IMR-90 (cell line): ENCODE measurements at regions of chr1 and their contacts with region 1.

Region 1: DNA sequence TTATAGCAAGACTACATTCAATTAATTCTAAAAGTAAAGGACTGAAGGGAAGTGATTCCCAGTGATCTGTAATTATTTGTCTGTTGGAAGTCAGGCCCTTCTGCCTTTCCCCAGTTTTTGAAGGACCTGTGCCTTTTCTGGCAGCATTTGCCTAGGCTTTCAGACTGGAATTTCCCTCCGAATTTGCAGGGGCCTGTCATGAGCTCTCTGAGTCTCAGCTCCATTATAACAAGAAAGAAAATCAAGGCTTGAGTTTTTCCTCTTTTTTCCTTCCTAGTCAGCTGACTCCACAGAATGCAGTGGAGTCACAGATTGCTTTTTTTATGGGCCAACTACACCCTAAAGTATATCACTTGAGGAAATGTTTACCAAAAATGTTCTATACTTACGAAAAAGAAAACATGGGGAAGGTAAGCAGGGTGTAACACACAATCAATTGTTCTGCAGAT is 1.1 kb downstream of the NR5A2 start:
- DNase-seq: no peak
- ATAC-seq: peak; percentile 32
- H3K4me3 ChIP-seq: peak overlapping the region; percentile 63
- H3K27ac ChIP-seq: no peak overlapping the region
- H3K4me1 ChIP-seq: 0 out of 2 replicates have a peak, but pooled peaks cover 2% of the 10 kb centered on the region
- H3K27me3 ChIP-seq: peaks cover 51% of the 10 kb centered on the region
- CTCF ChIP-seq: no peak
- POLR2A ChIP-seq: no peak
- RAD21 ChIP-seq: no peak

Region 2: DNA sequence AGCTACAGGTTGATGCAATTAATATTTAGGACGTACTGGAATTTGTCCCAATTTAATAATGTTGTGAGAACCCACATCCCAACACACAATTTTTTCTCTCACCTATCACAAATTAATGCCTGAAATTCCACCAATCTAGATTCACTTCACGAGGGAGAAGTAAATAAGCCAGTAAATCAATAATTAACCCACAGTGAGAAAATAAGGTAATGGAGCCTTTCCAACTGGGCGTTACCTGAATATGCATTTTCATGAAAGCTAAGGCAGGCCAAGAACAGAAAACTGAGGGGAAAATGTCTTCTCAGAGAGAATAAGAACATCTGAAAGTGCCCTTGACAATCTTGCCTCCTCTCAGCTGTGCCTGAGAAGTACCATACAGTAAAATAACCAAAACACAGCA is 241.9 kb before region 1 on chr1:
- CTCF ChIA-PET with region 1: interaction called, 10 read pairs
- POLR2A ChIA-PET with region 1: no interaction called
- dilution Hi-C with region 1: no loop called
- in situ Hi-C with region 1: no loop called
- intact Hi-C with region 1: no loop called
- DNase-seq: no peak
- ATAC-seq: no peak
- H3K4me3 ChIP-seq: no peak overlapping the region
- H3K27ac ChIP-seq: no peak overlapping the region
- H3K4me1 ChIP-seq: peaks cover 2% of the 10 kb centered on the region
- H3K27me3 ChIP-seq: no peaks in the 10 kb centered on the region
- CTCF ChIP-seq: no peak
- POLR2A ChIP-seq: no peak
- RAD21 ChIP-seq: no peak

Region 3: GRCh38 chr1:199954699-199955098 is 73.9 kb before region 1 on chr1:
- CTCF ChIA-PET with region 1: no interaction called
- POLR2A ChIA-PET with region 1: no interaction called
- dilution Hi-C with region 1: no loop called
- in situ Hi-C with region 1: no loop called
- intact Hi-C with region 1: no loop called
- DNase-seq: no peak
- ATAC-seq: 0 out of 2 replicates have a peak, but pooled peaks have one; percentile 37
- H3K4me3 ChIP-seq: no peak overlapping the region
- H3K27ac ChIP-seq: no peak overlapping the region
- H3K4me1 ChIP-seq: no peaks in the 10 kb centered on the region
- H3K27me3 ChIP-seq: no peaks in the 10 kb centered on the region
- CTCF ChIP-seq: peak; percentile 29
- POLR2A ChIP-seq: no peak
- RAD21 ChIP-seq: no peak

Region 4: GRCh38 chr1:200240656-200241055 is 212.0 kb after region 1 on chr1:
- CTCF ChIA-PET with region 1: no interaction called
- POLR2A ChIA-PET with region 1: interaction called, 18 read pairs
- dilution Hi-C with region 1: no loop called
- in situ Hi-C with region 1: no loop called
- intact Hi-C with region 1: no loop called
- DNase-seq: peak; percentile 47
- ATAC-seq: peak; percentile 64; the same call in 1 of the 2 replicates
- H3K4me3 ChIP-seq: no peak overlapping the region
- H3K27ac ChIP-seq: no peak overlapping the region
- H3K4me1 ChIP-seq: peaks cover 6% of the 10 kb centered on the region
- H3K27me3 ChIP-seq: no peaks in the 10 kb centered on the region
- CTCF ChIP-seq: no peak
- POLR2A ChIP-seq: no peak
- RAD21 ChIP-seq: no peak